ENCODE measurements at regions of chr19 and their contacts with region 1.

Region 1: GRCh38 chr19:8238251-8238650 is 29.1 kb downstream of the CERS4 start:
- DNase-seq: no peak
- ATAC-seq: no peak
- H3K4me3 Mint-ChIP-seq: no peak overlapping the region
- H3K27ac Mint-ChIP-seq: peak overlapping the region; percentile 60
- H3K4me1 Mint-ChIP-seq: peaks cover 18% of the 10 kb centered on the region
- H3K27me3 Mint-ChIP-seq: no peaks in the 10 kb centered on the region

Region 2: DNA sequence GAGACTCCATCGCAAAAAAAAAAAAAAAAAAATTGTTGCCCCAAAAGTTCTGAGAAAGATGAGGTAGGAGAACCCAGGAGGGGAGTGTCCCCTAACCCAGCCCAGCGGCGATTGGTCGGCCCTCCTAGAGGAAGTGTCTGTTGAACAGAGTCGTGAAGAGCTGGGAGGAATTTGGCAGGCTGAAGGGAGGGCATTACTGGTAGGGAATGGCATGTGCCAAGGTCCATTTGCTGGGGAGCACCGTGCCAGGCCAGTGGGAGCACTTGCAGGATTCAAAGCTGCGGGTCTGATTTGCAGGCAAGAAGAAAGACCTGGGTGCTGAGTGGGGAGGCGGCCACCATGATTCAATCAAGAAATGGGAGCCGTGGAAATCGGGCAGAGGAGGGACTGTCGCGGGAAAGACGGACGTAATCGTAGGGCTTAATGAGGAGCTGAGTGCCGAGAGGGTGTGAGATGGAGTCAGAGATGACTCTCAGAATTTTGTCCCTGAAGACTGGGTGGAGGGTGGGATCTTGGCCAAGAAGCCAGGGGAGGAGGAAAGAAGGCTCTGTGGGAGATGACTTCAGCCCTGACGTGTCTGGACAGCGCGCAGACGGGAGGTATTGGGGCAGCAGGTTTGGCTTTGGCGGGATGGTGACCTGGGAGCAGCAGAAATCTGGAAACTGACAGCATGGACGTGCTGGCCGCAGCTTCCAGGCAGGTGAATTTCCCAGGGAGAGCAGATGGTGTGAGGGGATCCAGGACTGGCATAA is 13.7 kb before region 1 on chr19:
- POLR2A ChIA-PET with region 1: interaction called, 10 read pairs
- DNase-seq: no peak
- ATAC-seq: no peak
- H3K4me3 Mint-ChIP-seq: no peak overlapping the region
- H3K27ac Mint-ChIP-seq: peak overlapping the region; percentile 4
- H3K4me1 Mint-ChIP-seq: peaks cover 8% of the 10 kb centered on the region
- H3K27me3 Mint-ChIP-seq: no peaks in the 10 kb centered on the region

Region 3: DNA sequence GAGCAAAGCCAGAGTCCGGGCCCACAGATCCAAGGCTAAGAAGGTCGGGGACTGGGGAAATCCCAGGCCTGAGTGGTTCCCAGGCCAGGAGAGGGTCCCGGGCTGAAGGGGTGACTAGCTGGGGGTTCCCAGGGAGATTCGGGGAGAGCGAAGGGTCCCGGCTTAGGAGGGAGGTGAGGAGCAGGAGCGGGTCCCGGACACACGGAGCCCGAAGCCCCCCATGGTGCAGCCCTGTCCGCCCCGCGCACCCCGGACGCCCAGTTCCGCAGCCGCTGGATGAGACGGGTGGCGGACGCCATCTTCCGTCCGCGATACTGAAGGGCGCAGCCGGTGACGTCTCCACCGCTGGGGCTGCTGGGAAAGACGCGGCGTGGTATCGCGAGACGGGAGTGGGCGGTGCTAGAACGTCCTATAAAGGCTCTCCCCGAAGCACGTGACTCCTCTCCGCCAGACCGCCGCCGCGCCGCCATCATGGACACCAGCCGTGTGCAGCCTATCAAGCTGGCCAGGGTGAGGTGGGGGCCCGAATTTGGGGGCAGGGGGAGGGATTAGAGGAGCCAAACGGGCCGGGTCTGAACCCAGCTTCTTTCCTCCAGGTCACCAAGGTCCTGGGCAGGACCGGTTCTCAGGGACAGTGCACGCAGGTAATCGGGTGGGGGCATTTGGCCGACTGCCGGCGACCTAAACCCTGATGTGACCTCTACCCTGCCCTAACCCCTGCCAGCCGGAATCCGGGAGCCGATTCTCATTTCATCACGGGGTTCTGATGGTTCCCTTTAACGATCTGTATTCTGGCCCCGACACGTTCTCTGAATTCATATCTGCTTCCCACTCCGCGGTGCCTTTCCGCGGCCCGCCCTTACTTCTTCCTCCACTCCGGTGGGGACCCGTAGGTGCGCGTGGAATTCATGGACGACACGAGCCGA is 83.1 kb after region 1 on chr19 and contains the starts of genes NDUFA7 and RPS28:
- POLR2A ChIA-PET with region 1: no interaction called
- DNase-seq: peak; percentile 98
- ATAC-seq: peak; percentile 89
- H3K4me3 Mint-ChIP-seq: peak within 1 kb of the TSS; percentile 99
- H3K27ac Mint-ChIP-seq: peak within 1 kb of the TSS; percentile 100
- H3K4me1 Mint-ChIP-seq: peaks cover 30% of the 10 kb centered on the region
- H3K27me3 Mint-ChIP-seq: no peaks in the 10 kb centered on the region
- total RNA-seq, gene NDUFA7: 53.8 to 59.0 TPM
- total RNA-seq, gene RPS28: 1,838 to 1,917 TPM